ENCODE measurements at regions of chr12 and their contacts with region 1.

Region 1: GRCh38 chr12:107760809-107761501 is at the start of gene PRDM4:
- DNase-seq: peak; percentile 98
- H3K4me3 Mint-ChIP-seq: peak within 1 kb of the TSS; percentile 93
- H3K27ac Mint-ChIP-seq: peak within 1 kb of the TSS; percentile 88
- H3K4me1 Mint-ChIP-seq: peaks cover 26% of the 10 kb centered on the region
- H3K27me3 Mint-ChIP-seq: peaks cover 7% of the 10 kb centered on the region
- total RNA-seq, gene PRDM4: 30.2 and 31.1 TPM in 2 replicates

Region 2: DNA sequence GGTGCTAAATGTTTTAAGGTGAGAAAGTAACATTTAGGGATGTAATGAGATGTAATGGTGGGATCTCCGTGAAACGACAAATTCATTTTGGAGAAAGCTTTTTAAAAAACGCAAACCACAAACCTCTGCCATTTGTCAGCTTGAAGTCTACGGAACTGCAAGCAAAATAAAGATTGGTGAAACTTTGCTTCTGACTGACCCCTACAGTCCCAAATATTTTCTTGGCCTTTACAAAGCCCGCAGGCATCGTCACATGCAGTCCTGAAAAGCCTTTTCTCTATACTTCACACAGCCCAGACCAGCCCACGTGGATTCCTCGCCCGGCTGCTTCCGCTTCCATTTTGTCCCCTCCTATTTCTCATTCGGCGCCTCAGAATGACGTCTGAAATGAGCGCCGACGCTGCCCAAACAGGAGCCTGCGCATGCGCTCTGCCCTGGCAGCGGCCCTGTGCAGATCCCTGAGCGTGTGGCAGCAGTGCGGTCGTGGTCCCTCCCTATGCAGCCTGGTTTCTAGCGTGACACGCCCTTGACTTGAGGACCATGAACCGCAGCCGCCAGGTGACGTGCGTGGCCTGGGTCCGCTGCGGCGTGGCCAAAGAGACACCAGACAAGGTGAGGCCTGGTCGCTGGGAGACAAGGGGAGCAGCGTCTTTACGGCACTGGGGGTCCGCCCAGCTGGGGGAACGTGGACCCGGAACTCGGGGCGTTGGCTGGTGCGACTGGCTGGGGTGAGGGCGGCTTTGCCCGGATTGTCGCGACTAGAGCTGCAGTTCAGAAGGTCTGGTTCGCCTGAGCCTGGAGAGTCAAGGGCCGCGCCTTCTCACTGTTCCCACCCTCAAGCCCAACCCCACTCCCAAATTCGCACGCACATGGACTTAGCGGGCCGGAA is 75.4 kb before region 1 on chr12 and contains the start of gene PWP1:
- intact Hi-C with region 1: loop called (anchors 1 kb)
- DNase-seq: peak; percentile 99
- H3K4me3 Mint-ChIP-seq: peak within 1 kb of the TSS; percentile 93
- H3K27ac Mint-ChIP-seq: peak within 1 kb of the TSS; percentile 92
- H3K4me1 Mint-ChIP-seq: peaks cover 26% of the 10 kb centered on the region
- H3K27me3 Mint-ChIP-seq: peaks cover 2% of the 10 kb centered on the region
- total RNA-seq, gene PWP1: 56.3 and 63.2 TPM in 2 replicates

Region 3: GRCh38 chr12:107884769-107885694 is 124.1 kb after region 1 on chr12:
- intact Hi-C with region 1: loop called (anchors 2 kb)
- DNase-seq: peak; percentile 81
- H3K4me3 Mint-ChIP-seq: no peak overlapping the region
- H3K27ac Mint-ChIP-seq: no peak overlapping the region
- H3K4me1 Mint-ChIP-seq: no peaks in the 10 kb centered on the region
- H3K27me3 Mint-ChIP-seq: peaks cover 23% of the 10 kb centered on the region

Measured in activated CD4-positive, alpha-beta T cell treated with anti-CD3 and anti-CD28 coated beads, Interleukin-2, amount 10 ng/mL, durations not matched to agents 24 days and 14 days (primary cell).